ENCODE measurements at regions of chr9 and their contacts with region 1.

Region 1: GRCh38 chr9:5195453-5195852 is 10.0 kb upstream of the INSL6 start:
- DNase-seq: no peak
- ATAC-seq: no peak
- H3K4me3 ChIP-seq: no peak overlapping the region
- H3K27ac ChIP-seq: no peak overlapping the region
- H3K4me1 ChIP-seq: no peaks in the 10 kb centered on the region
- H3K27me3 ChIP-seq: no peaks in the 10 kb centered on the region
- CTCF ChIP-seq: no peak

Region 2: GRCh38 chr9:5278486-5278885 is 83.0 kb after region 1 on chr9:
- intact Hi-C with region 1: no loop called
- DNase-seq: no peak
- ATAC-seq: no peak
- H3K4me3 ChIP-seq: no peak overlapping the region
- H3K27ac ChIP-seq: no peak overlapping the region
- H3K4me1 ChIP-seq: no peaks in the 10 kb centered on the region
- H3K27me3 ChIP-seq: no peaks in the 10 kb centered on the region
- CTCF ChIP-seq: no peak

Region 3: DNA sequence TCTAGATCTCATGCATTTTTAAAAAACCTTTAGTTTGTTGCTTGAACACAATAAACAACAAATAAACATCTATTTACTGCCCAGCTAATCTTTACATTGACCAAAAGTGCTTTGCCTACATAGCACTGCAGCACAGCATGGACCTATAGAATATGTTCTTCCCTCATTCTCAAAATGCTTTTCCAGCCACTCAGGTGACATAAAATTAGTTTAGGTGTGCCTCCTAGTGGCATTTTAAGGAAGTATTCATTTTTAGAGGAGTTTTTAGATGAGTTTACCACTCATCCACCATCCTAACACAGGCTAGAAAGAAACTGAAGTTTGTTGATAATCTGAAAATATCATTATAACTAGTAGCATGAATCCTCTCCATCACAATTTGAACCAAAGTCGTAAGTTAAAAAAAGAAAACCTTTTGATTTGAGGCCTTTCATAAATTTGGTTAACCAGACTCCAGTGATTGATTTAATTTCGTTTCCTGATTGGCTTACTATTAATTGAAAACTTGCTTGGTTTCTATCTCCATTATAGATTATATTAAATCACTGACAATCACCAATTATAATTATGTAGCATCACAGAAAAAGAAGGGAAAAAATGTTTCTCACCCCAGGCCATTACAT is 229.7 kb after region 1 on chr9:
- intact Hi-C with region 1: no loop called
- DNase-seq: no peak
- ATAC-seq: no peak
- H3K4me3 ChIP-seq: no peak overlapping the region
- H3K27ac ChIP-seq: no peak overlapping the region
- H3K4me1 ChIP-seq: no peaks in the 10 kb centered on the region
- H3K27me3 ChIP-seq: no peaks in the 10 kb centered on the region
- CTCF ChIP-seq: peak; percentile 53

Region 4: DNA sequence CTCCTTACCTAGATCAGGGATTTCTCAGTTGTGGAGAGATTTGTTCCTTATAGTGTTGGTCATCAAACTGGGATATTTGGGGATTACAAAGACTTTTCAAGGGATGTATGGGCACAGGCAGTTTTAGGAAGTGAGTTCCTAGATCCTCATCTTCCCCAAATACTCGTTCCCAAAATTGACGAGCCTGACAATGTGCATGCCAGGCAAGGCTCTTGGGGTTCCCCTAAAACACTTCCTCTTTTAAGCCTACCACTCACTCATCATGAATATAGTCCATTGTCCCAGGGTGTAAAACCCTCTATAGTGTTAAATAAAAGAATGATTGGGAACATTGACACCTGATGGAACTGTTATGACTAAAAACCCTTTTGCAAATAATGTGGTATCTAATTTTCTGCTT is 341.2 kb after region 1 on chr9:
- intact Hi-C with region 1: no loop called
- DNase-seq: no peak
- ATAC-seq: peak in 1 of 2 donors; percentile 42
- H3K4me3 ChIP-seq: no peak overlapping the region
- H3K27ac ChIP-seq: no peak overlapping the region
- H3K4me1 ChIP-seq: peaks cover 8% of the 10 kb centered on the region
- H3K27me3 ChIP-seq: no peaks in the 10 kb centered on the region
- CTCF ChIP-seq: no peak

Region 5: DNA sequence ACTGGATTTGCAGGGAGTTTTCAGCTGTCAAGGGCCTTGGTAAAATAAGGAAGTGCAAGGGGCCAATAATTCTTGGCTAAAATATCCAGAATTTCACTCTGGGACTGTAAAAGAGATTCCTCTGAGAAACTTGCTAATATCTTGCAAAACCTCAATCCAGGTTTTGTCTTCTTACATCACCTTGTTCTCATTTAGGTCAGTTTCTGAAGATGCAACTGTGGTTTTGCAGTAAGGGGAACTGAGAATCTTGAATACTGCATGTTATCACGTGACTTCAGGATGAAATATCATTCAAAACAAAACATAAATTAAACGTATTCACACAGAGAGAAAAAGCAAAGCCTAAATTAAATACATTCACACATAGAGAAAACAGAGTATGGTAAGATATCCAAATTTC is 398.5 kb after region 1 on chr9:
- intact Hi-C with region 1: loop called (anchors 10 kb)
- DNase-seq: no peak
- ATAC-seq: no peak
- H3K4me3 ChIP-seq: no peak overlapping the region
- H3K27ac ChIP-seq: no peak overlapping the region
- H3K4me1 ChIP-seq: peaks cover 8% of the 10 kb centered on the region
- H3K27me3 ChIP-seq: no peaks in the 10 kb centered on the region
- CTCF ChIP-seq: no peak